AG04449 (cell line): ENCODE measurements at regions of chr9 and their contacts with region 1.

Region 1: GRCh38 chr9:34403554-34404380 is 27.1 kb upstream of the MYORG start:
- DNase-seq: no peak
- H3K4me3 ChIP-seq: no peak overlapping the region
- CTCF ChIP-seq: peak; percentile 92

Region 2: DNA sequence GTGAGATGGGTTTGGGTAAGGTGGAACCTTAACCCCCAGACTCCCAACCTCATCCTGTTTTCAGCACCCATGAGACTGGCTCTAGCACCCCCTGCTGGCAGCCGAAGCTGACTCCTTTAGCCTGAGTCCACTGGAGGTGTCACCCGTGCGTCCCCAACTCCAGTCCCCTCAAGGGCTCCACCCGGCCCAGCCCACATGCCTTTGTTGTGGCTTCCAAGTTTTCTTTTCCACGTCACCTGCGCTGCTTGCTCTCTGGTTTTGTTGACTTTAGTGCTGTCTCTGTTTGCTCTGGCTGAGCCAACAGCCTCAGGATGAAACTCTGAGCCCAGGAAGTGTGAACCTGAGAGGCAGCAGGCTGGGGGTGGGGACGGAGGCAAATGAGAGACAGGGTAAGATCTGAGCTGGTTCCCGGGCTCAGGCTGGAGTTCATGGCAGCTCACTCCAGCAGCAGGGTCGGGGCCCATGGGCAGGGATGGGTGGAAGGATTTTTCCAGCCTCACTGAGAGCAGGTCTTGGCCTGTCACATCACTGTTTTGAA is 988.2 kb before region 1 on chr9:
- CTCF ChIA-PET with region 1: no interaction called
- POLR2A ChIA-PET with region 1: no interaction called
- DNase-seq: no peak
- H3K4me3 ChIP-seq: no peak overlapping the region
- CTCF ChIP-seq: peak; percentile 75

Region 3: GRCh38 chr9:34218446-34218845 is 185.3 kb before region 1 on chr9:
- CTCF ChIA-PET with region 1: no interaction called
- POLR2A ChIA-PET with region 1: no interaction called
- DNase-seq: peak; percentile 29
- H3K4me3 ChIP-seq: no peak overlapping the region
- CTCF ChIP-seq: no peak

Region 4: GRCh38 chr9:34386656-34387055 is 17.1 kb before region 1 on chr9:
- CTCF ChIA-PET with region 1: interaction called, 57 read pairs
- POLR2A ChIA-PET with region 1: no interaction called
- DNase-seq: no peak
- H3K4me3 ChIP-seq: no peak overlapping the region
- CTCF ChIP-seq: no peak

Region 5: DNA sequence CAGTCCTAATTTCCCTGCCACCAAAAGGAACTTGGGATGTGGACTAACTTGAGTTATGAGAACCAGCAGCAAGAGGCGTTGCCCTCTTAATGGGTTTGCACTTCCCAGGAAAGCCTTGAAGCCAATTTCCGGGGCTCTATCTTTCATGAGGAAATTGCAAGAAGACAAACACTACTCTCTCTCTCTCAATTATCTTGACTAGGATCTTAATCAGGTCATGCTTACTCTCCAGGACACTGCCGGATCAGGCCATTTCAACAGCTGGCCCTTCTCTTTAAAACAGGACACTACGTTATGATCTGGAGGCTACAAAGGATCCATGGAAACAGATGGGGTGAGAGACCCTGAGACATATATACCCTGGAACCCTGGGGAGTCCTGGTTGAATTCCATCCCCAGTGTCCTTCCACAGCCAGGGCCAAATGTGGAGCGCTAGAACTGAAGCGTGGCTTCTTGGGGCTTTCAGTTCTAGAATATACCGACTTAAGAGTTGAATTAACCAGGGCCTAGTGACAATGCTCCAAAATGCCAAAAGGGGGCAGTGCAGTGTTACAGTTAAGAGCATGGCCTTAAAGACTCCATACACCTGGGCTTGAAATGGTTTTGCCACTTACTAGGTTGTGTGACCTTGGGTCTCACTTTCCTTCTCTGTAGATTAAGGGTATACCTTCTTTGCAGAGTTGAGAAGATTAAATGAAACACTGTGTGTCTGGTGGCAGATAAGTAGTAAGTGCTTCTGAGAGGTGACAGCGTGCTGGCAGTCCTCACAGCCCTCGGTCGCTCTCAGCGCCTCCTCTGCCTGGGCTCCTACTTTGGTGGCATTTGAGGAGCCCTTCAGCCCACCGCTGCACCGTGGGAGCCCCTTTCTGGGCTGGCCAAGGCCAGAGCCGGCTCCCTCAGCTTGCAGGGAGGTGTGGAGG is 33.5 kb after region 1 on chr9:
- CTCF ChIA-PET with region 1: interaction called, 29 read pairs
- POLR2A ChIA-PET with region 1: no interaction called
- DNase-seq: no peak
- H3K4me3 ChIP-seq: no peak overlapping the region
- CTCF ChIP-seq: peak; percentile 71

Region 6: DNA sequence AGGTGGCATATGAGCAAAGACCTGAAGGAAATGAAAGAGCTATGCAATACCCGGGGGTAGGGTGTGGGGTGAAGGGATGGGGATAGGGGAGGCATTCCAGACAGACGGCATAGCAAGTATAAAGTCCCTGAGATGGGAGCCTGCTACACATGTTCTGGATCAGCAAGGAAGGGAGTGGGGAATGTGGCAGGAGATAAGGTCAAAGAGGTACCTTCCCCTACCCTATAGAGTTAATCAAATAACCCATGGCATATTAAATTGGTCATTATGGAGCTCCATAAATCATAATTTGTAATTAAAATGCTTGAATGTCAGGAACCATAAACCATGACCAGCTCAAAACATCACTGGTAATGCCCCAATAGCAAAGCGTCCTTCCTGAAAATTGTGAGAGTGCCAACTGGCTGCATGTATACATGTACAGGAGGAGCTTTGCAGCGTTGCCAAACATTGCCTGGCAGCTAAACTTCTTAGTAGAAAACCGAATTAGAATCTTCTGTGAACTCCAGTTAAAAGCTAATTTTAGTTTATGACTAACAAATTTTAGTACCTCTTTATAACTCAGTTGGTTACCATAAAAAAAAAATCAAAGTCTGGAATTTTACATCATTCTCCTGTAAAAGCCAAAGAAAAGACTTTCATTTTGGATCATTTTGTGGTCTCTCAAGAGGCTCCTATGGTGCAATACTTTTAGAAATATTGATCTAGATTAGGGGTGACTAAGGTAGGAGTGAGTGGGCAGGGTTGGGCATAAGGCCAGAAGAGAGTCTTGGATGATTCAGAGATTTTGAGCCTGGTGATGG is 59.5 kb after region 1 on chr9:
- CTCF ChIA-PET with region 1: interaction called, 10 read pairs
- POLR2A ChIA-PET with region 1: no interaction called
- DNase-seq: no peak
- H3K4me3 ChIP-seq: no peak overlapping the region
- CTCF ChIP-seq: no peak

Region 7: DNA sequence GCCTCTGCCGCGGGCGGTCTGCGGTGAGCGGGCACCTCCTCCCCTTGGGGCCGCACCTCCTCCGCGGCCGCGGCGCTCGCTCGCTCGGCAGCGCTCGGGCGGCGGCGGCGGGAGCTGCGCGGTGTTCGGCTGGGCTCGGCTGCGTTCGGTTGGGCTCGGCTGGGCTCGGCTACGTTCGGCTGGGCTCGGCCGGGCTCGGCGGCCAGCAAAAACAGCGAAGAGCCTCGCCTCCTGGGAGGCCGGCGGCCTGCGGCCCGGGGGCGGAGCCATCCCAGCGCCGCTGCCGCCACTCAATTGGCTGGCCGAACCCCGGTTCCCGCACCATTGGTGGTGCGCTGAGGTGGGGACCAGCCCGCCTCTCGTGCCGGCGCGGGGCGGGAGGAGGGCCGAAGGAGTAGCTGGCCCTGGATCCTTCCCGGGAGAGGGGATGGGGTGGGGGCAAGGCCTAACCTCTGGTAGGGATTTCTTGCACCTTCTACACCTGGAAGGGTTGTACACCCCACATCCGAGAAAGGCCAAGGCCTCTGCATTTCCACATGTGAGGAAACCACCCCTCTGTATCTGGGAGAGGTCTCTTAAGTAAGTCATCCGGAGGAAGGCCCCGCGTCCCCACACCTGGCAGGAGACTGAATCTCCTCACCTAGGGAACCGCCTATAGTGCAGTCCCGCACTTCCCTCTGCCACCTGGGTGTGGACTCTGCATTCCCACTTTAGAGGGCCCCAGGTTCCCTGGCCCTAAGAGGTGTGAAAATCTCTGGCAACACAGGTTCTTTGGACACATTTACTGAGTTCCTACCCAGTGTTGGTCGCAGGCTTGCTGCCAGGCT is 119.4 kb after region 1 on chr9 and contains the start of gene ENHO:
- CTCF ChIA-PET with region 1: interaction called, 13 read pairs
- POLR2A ChIA-PET with region 1: no interaction called
- DNase-seq: peak; percentile 4
- H3K4me3 ChIP-seq: peak within 1 kb of the TSS; percentile 42
- CTCF ChIP-seq: no peak

Region 8: GRCh38 chr9:34591248-34591916 is 187.6 kb after region 1 on chr9:
- CTCF ChIA-PET with region 1: interaction called, 105 read pairs
- POLR2A ChIA-PET with region 1: no interaction called
- DNase-seq: no peak
- H3K4me3 ChIP-seq: no peak overlapping the region; the same call in 1 of the 2 replicates
- CTCF ChIP-seq: peak; percentile 99